ENCODE measurements at regions of chr9 and their contacts with region 1.

Region 1: DNA sequence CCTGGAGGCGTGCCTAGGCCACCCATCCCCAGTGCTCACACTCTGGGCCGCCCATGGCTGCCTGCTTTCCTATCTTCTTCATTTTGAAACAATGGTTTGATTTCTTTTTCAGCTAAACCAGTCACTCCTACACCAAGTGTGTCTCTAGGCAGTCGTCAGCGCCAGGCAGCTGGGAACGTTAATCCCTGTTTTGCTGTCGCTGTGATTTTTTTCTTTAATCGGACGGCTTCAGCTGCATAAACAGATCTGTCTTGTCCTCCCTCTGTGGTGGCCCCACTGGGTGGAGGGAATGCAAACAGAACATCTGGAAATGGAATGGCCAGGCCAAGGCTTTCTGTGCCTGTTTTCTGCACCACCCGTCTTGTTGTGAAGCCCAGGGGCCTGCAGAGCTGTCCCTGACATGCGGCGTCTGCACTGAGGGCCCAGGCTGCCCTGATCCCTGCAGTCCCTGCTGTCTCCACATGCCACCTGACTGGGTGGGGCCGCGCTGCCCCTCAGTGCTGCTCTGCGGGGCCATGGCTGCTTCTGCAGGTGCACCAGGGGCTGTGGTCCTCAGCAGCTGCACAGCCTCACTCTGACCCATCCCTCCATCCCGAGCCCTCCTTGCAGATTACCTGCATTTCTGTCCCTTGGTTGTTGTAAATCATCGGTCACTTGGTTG is 51.5 kb downstream of the WNK2 start:
- DNase-seq: no peak
- H3K4me3 ChIP-seq: no peak overlapping the region
- H3K27ac ChIP-seq: no peak overlapping the region
- H3K4me1 ChIP-seq: no peaks in the 10 kb centered on the region
- H3K27me3 ChIP-seq: no peaks in the 10 kb centered on the region
- CTCF ChIP-seq: no peak
- EP300 ChIP-seq: no peak
- POLR2A ChIP-seq: no peak

Region 2: DNA sequence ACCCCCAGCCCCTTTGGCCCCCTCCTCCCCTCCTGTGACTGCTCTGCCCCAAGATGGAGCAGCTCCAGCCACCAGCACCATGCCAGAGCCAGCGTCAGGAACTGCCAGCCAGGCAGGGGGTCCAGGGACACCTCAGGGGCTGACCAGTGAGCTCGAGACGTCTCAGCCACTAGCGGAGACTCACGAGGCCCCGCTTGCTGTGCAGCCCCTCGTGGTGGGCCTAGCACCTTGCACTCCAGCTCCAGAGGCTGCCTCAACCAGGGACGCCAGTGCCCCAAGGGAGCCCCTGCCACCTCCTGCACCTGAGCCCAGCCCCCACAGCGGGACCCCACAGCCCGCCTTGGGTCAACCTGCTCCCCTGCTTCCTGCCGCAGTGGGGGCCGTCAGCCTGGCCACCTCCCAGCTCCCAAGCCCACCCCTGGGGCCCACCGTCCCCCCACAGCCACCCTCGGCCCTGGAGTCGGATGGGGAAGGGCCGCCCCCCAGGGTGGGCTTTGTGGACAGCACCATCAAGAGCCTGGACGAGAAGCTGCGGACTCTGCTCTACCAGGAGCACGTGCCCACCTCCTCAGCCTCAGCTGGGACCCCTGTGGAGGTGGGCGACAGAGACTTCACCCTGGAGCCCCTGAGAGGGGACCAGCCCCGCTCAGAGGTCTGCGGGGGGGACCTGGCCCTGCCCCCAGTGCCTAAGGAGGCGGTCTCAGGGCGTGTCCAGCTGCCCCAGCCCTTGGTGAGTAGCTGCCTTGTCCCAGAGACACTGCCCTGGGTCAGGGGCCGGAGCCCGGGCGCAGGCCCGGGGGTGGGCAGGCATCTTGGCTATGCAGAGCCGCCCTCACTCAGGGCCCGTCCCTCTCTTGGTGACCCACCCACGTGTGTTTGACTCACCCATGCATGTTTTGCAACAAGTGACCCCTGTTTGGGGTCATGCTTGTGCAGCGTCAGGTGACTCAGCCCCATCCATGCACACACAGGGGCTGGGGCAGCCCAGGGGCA is 53.8 kb after region 1 on chr9:
- intact Hi-C with region 1: loop called in 1 of 4 experiments (anchors 5 kb)
- DNase-seq: peak in 2 of 5 donors; percentile 9 to 25
- H3K4me3 ChIP-seq: no peak overlapping the region
- H3K27ac ChIP-seq: no peak overlapping the region
- H3K4me1 ChIP-seq: no peaks in the 10 kb centered on the region
- H3K27me3 ChIP-seq: no peaks in the 10 kb centered on the region
- CTCF ChIP-seq: no peak
- EP300 ChIP-seq: no peak
- POLR2A ChIP-seq: no peak

Measured in ovary (tissue), 10 donors.